Activated B cell treated with CpG ODN at 0.5 μM for 24 hours (primary cell): ENCODE measurements at regions of chr3 and their contacts with region 1.

Region 1: DNA sequence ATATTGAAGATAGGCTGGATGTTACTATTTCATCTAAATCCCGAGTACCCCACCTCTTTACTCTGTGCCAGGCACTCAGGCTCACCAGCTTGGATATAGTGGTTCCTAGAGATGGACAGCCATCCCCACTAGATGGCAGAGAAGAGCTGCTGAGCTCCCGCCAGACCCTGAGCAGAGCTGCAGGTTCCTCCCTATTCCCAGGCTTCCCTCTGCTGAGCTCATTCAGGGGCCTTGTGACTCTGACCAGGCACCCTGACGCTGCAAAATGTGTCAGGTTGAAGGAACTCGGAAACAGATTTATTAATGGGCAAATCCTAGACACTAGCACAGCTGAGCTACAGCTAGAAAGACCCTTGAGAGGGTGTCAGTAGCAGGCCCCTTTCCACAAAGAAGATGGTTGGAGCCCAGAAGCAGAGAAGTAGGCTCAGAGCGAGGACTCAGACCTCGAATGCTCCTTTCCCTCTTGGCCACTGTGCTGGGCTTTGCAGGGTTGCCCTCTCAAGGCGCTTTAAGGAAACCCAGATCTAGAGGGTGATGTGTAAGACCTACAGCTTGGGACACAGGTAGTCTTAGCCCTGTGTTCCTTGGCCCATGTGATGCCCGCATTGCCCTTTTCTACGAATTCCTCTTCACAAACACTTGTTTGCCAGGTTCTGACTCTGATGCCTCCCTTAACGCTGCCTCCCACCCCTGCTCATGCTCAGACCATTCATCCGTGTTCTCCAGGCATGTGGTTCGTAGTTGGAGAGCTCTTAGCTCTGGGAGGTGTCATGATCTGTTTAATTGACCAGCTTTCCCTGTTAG is 38.0 kb upstream of the RHO start:
- DNase-seq: peak; percentile 30
- ATAC-seq: peak; percentile 95
- H3K4me3 Mint-ChIP-seq: no peak overlapping the region
- H3K27ac Mint-ChIP-seq: no peak overlapping the region
- H3K4me1 Mint-ChIP-seq: no peaks in the 10 kb centered on the region
- H3K27me3 Mint-ChIP-seq: no peaks in the 10 kb centered on the region
- CTCF ChIP-seq: peak; percentile 27

Region 2: GRCh38 chr3:129576514-129577352 is 86.3 kb after region 1 on chr3:
- CTCF ChIA-PET with region 1: interaction called, 11 read pairs
- POLR2A ChIA-PET with region 1: no interaction called
- intact Hi-C with region 1: no loop called
- DNase-seq: peak; percentile 53
- ATAC-seq: peak; percentile 63
- H3K4me3 Mint-ChIP-seq: peak overlapping the region; percentile 48
- H3K27ac Mint-ChIP-seq: peak overlapping the region; percentile 86
- H3K4me1 Mint-ChIP-seq: peaks cover 61% of the 10 kb centered on the region
- H3K27me3 Mint-ChIP-seq: no peaks in the 10 kb centered on the region
- CTCF ChIP-seq: no peak

Region 3: DNA sequence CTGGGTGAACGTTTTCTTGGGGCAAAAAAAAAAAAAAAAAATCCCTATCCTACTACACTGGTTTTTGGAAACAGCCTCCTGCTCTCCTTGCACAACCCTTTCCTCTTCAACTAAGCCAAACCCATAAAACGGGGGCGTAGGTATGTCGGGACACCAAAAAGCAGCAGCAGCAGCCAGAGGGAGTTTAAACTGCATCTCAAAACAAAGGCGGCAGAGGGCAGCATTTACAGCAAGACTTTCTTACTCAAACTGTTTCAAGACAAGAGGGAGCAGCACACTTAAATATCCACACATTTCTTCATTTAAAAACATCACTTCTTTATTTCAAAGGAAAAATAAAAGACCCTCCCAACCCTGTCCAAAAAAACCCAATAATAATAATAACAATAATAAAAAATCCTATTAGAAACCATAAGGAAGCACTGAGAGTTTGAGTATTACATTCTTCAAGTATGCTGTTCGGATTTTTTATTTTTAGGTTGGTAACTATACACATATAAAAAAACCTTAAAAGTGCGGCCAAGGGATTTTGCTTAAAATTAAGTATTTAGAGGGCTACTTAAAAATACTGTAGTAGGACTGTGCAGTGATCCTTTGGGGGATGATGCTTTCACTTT is 159.9 kb after region 1 on chr3:
- CTCF ChIA-PET with region 1: interaction called, 8 read pairs
- POLR2A ChIA-PET with region 1: no interaction called
- intact Hi-C with region 1: loop called (anchors 1 kb)
- DNase-seq: no peak
- ATAC-seq: peak; percentile 47
- H3K4me3 Mint-ChIP-seq: no peak overlapping the region
- H3K27ac Mint-ChIP-seq: no peak overlapping the region
- H3K4me1 Mint-ChIP-seq: peaks cover 2% of the 10 kb centered on the region
- H3K27me3 Mint-ChIP-seq: no peaks in the 10 kb centered on the region
- CTCF ChIP-seq: no peak

Region 4: GRCh38 chr3:129834580-129834979 is 344.1 kb after region 1 on chr3:
- CTCF ChIA-PET with region 1: interaction called, 76 read pairs
- POLR2A ChIA-PET with region 1: no interaction called
- intact Hi-C with region 1: loop called (anchors 1 kb)
- DNase-seq: no peak
- ATAC-seq: no peak
- H3K4me3 Mint-ChIP-seq: no peak overlapping the region
- H3K27ac Mint-ChIP-seq: no peak overlapping the region
- H3K4me1 Mint-ChIP-seq: no peaks in the 10 kb centered on the region
- H3K27me3 Mint-ChIP-seq: no peaks in the 10 kb centered on the region
- CTCF ChIP-seq: no peak

Region 5: DNA sequence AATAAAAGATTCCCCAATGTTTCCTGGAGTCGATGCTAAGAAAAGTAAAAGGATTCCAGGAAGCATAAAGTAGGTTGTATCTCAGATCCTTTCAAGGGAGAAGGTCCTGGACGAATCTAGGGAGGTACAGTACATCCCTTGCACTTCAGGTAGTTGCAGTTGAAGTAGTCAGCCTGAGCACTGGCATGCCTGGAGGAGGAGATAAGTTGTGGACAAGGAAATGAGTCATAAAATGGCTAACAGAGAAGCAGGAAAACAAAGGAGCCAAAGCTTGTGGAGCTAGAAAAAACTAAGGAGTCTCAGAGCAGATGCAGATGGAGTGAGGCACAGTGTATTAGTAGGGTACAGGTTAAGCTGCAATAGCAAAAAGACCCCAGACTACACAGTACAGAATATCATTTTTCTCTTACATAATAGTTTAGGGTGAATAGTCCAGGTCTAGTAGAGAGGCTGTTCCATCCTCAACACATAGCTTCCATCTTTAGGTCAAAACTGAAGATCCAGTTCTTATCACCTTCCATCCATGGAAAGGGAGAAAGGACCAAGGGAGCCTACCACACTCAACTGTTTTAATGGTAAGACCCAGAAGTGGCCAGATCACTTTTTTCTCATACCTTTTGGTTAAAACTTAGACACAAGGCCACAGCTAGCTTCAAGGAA is 896.3 kb after region 1 on chr3:
- CTCF ChIA-PET with region 1: no interaction called
- POLR2A ChIA-PET with region 1: no interaction called
- intact Hi-C with region 1: no loop called
- DNase-seq: no peak
- ATAC-seq: no peak
- H3K4me3 Mint-ChIP-seq: no peak overlapping the region
- H3K27ac Mint-ChIP-seq: no peak overlapping the region
- H3K4me1 Mint-ChIP-seq: no peaks in the 10 kb centered on the region
- H3K27me3 Mint-ChIP-seq: no peaks in the 10 kb centered on the region
- CTCF ChIP-seq: no peak